Colonic mucosa (tissue), 4 donors: ENCODE measurements at regions of chrX and their contacts with region 1.

Region 1: GRCh38 chrX:154918060-154918483 is 31.9 kb downstream of the F8A1 start:
- DNase-seq: peak; percentile 48
- H3K4me3 ChIP-seq: no peak overlapping the region
- H3K27ac ChIP-seq: no peak overlapping the region
- H3K4me1 ChIP-seq: no peaks in the 10 kb centered on the region
- H3K27me3 ChIP-seq: no peaks in the 10 kb centered on the region
- CTCF ChIP-seq: peak; percentile 53

Region 2: DNA sequence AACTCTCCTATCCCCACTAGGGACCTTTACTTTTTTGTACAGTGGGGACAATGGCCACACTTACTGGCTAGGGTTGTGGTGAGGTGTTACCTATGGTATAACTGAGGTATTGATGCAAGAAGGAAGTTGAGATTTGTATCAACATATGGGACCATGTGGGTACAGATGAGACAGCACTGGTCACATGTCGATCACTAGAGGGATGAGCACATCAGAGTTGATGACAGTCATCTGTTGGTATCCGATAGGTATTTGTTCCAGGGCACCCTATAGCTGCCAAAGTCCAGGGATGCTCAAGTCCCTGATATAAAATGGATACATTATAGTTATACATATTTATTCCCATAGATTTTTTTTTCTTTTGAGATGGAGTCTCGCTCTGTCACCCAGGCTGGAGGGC is 415.1 kb before region 1 on chrX:
- intact Hi-C with region 1: no loop called
- DNase-seq: no peak
- H3K4me3 ChIP-seq: no peak overlapping the region
- H3K27ac ChIP-seq: no peak overlapping the region
- H3K4me1 ChIP-seq: no peaks in the 10 kb centered on the region
- H3K27me3 ChIP-seq: no peaks in the 10 kb centered on the region
- CTCF ChIP-seq: no peak

Region 3: GRCh38 chrX:154710315-154710714 is 207.8 kb before region 1 on chrX:
- intact Hi-C with region 1: no loop called
- DNase-seq: no peak
- H3K4me3 ChIP-seq: no peak overlapping the region
- H3K27ac ChIP-seq: no peak overlapping the region
- H3K4me1 ChIP-seq: no peaks in the 10 kb centered on the region
- H3K27me3 ChIP-seq: no peaks in the 10 kb centered on the region
- CTCF ChIP-seq: no peak

Region 4: DNA sequence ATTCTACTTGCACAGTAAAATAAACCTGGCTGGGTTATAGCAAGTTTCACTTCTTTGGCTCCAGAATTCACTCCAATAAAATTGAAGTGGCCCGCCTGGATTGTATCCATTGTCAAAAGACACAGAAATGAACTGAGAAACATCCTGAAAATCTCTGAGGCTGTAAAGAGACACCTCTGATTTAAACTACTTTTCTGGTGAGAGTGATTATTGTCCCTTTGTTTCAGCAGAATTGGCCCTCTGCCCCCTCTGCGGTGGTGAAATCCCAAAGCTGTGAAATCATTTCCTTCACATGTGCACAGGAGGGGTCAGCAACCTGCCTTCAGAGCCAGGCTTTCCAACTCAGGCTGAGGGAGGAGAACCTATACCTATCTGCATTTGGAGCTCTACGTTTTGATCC is 190.2 kb before region 1 on chrX:
- intact Hi-C with region 1: no loop called
- DNase-seq: no peak
- H3K4me3 ChIP-seq: no peak overlapping the region
- H3K27ac ChIP-seq: no peak overlapping the region
- H3K4me1 ChIP-seq: no peaks in the 10 kb centered on the region
- H3K27me3 ChIP-seq: no peaks in the 10 kb centered on the region
- CTCF ChIP-seq: no peak

Region 5: GRCh38 chrX:155086202-155086840 is 168.2 kb after region 1 on chrX:
- intact Hi-C with region 1: loop called (anchors 10 kb)
- DNase-seq: peak; percentile 35
- H3K4me3 ChIP-seq: no peak overlapping the region
- H3K27ac ChIP-seq: no peak overlapping the region
- H3K4me1 ChIP-seq: no peaks in the 10 kb centered on the region
- H3K27me3 ChIP-seq: no peaks in the 10 kb centered on the region
- CTCF ChIP-seq: peak; percentile 38